ENCODE measurements at regions of chr15 and their contacts with region 1.

Region 1: DNA sequence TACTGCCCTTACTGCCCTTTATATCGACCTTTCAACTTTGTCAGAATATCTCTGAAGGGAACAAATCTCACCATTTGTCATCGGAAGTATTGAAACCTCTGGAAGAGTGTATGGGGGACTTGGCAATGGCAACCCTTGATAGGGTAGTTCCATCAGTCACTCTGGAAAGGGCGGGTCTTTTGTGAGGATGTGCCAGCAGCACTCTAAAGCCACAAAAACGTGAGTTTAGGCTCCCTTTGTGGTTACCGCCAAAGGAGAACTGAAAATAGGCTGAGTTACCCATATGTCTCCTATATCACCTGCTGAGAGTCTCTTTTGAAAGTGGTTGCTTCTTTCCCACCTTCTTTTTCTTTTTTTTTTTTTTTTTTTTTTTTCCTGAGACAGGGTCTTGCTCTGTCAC is 296.8 kb upstream of the CHRM5 start:
- DNase-seq: no peak
- H3K27ac ChIP-seq: no peak overlapping the region
- CTCF ChIP-seq: no peak

Region 2: DNA sequence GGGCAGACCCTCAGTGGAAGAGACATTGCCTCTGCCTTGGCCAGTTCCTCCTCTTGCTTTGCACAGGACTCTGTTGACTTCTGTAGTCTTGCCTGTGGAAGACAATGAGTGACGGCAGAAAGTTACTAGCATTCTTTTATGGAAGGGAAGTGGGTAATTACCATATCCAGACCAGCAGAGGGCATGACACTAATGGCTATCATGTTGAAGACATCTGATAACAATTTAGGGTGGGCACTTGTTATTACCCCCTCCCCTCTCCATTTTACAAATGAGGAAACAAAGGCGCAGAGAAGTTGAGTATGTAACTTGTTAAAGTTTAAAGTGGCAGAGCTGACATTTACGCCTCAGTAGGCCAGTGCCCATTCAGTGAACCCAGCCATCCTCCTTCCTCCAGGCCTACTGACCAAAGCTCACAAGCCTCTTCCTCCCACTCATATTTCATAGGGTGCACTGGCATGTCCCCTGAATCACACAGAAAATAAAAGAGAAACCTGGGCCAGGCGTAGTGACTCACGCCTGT is 428.7 kb before region 1 on chr15:
- CTCF ChIA-PET with region 1: interaction called, 12 read pairs
- POLR2A ChIA-PET with region 1: no interaction called
- DNase-seq: no peak
- H3K27ac ChIP-seq: no peak overlapping the region
- CTCF ChIP-seq: peak; percentile 35